ENCODE measurements at regions of chr16 and their contacts with region 1.

Region 1: DNA sequence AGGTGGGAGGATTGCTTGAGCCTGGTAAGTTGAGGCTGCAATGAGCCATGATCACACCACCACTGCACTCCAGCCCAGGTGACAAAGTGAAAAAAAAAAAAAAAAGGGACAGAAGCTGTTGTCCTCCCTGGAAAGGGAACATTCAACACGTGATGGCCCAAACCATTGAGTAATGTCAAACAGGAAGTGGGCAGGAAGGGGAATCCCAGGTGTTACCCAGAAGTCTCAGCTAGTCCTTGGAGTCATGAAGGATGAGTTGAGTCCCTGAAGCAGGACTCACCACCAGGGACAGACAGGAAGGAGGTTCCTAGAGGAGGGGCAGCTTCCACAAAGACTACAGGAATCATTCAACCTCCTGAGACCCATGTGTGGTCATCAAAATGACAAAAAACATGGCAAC is 19.8 kb upstream of the CMIP start:
- DNase-seq: no peak
- H3K4me3 ChIP-seq: no peak overlapping the region
- H3K27ac ChIP-seq: no peak overlapping the region
- H3K4me1 ChIP-seq: no peaks in the 10 kb centered on the region
- H3K27me3 ChIP-seq: no peaks in the 10 kb centered on the region
- CTCF ChIP-seq: no peak

Region 2: DNA sequence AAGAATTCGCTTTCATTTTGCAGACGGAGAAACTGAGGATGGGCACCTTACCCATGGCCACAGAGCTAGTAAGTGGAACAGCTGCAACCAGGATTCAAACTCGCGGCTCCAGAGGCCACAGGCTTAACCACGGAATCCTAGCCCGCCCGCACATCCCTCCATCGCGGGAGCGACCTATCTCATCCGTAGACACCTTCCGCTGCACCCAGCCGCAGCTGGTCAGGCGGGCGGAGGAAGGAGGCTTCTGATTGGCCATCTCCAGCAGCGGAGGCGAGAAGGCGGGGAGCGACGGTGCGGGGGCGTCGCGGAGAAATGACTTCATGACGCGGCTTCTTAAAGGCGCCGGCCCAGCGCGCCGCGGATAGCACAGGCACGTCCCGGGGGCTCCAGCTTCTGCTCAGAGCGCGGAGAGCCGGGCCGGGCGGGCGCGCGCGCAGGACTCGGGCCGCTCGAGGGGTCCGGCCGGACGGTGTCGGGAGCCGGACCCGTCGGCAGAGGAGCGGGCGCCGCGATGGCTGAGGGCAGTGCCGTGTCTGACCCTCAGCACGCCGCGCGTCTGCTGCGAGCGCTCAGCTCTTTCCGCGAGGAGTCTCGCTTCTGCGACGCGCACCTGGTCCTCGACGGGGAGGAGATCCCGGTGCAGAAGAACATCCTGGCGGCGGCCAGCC is 110.0 kb before region 1 on chr16 and contains the start of gene GAN:
- CTCF ChIA-PET with region 1: no interaction called
- POLR2A ChIA-PET with region 1: no interaction called
- intact Hi-C with region 1: no loop called
- DNase-seq: peak; percentile 98
- H3K4me3 ChIP-seq: peak within 1 kb of the TSS; percentile 85
- H3K27ac ChIP-seq: peak within 1 kb of the TSS; percentile 87
- H3K4me1 ChIP-seq: peaks cover 26% of the 10 kb centered on the region
- H3K27me3 ChIP-seq: no peaks in the 10 kb centered on the region
- CTCF ChIP-seq: no peak
- total RNA-seq, gene GAN: 15.2 and 18.0 TPM in 2 replicates

Region 3: GRCh38 chr16:81454044-81454443 is 29.3 kb after region 1 on chr16:
- CTCF ChIA-PET with region 1: no interaction called
- POLR2A ChIA-PET with region 1: interaction called, 15 read pairs
- intact Hi-C with region 1: no loop called
- DNase-seq: no peak
- H3K4me3 ChIP-seq: no peak overlapping the region
- H3K27ac ChIP-seq: no peak overlapping the region
- H3K4me1 ChIP-seq: peaks cover 7% of the 10 kb centered on the region
- H3K27me3 ChIP-seq: no peaks in the 10 kb centered on the region
- CTCF ChIP-seq: no peak

Region 4: DNA sequence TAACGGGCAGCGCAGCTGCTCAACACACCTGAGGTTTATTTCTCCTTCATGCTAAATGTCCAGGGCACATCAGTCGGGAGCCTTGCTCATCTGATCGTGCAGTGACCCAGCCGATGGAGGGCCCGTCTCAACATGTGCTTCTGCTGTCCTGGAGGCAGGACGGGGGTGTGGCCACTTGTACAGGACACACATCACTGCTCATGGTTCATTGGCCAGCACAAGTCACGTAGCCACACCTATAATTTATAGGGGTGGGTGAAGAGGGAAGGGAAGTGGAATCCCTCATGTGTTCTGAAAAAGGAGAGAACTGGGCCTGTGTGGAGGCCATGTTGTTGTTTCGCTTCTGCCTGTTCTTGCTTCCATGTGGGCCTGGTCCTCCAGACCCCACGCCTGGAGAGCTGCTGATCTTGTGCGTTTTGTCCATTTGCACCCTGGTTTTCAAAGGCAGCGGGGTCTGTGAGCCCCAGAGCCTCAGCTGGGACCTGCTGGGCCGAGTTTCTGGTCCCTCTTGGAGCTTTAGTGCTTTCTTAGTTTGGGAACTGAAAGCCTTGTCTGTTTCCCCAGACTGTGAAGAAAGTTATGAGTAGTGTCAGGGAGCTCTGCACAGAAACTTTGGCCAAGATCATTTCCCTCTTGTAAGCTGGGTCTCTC is 80.4 kb after region 1 on chr16:
- CTCF ChIA-PET with region 1: no interaction called
- POLR2A ChIA-PET with region 1: no interaction called
- intact Hi-C with region 1: no loop called
- DNase-seq: no peak
- H3K4me3 ChIP-seq: no peak overlapping the region
- H3K27ac ChIP-seq: no peak overlapping the region
- H3K4me1 ChIP-seq: peaks cover 4% of the 10 kb centered on the region
- H3K27me3 ChIP-seq: no peaks in the 10 kb centered on the region
- CTCF ChIP-seq: no peak

Measured in A673 (cell line).